Left lung (tissue), 14 donors: ENCODE measurements at regions of chr9 and their contacts with region 1.

Region 1: GRCh38 chr9:13988944-13989343 is 325.0 kb downstream of the NFIB start:
- DNase-seq: no peak
- ATAC-seq: no peak
- H3K4me3 ChIP-seq: no peak overlapping the region
- H3K27ac ChIP-seq: no peak overlapping the region
- H3K4me1 ChIP-seq: no peaks in the 10 kb centered on the region
- H3K27me3 ChIP-seq: no peaks in the 10 kb centered on the region
- CTCF ChIP-seq: no peak

Region 2: DNA sequence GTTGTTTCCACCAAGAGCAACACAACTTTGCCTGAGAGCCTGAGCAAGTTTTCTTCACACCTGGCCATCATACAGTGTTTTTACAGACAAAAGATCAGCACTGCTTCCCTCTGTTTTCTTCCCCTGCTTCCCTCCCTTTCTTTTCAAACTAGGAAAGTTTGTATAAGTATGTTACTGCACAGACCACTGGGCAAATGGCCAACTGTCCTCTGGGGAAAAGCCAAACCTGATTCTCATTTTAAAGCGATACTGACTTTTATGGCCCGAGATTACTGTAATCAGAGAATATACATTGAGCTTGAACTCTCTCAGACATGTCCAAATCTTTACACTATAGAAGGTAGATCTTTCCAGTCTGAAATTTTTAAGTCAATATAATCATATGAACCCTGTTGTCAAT is 90.0 kb before region 1 on chr9:
- intact Hi-C with region 1: no loop called
- DNase-seq: peak in 2 of 4 donors; percentile 48 to 70
- ATAC-seq: no peak
- H3K4me3 ChIP-seq: no peak overlapping the region
- H3K27ac ChIP-seq: no peak overlapping the region
- H3K4me1 ChIP-seq: no peaks in the 10 kb centered on the region
- H3K27me3 ChIP-seq: no peaks in the 10 kb centered on the region
- CTCF ChIP-seq: no peak

Region 3: DNA sequence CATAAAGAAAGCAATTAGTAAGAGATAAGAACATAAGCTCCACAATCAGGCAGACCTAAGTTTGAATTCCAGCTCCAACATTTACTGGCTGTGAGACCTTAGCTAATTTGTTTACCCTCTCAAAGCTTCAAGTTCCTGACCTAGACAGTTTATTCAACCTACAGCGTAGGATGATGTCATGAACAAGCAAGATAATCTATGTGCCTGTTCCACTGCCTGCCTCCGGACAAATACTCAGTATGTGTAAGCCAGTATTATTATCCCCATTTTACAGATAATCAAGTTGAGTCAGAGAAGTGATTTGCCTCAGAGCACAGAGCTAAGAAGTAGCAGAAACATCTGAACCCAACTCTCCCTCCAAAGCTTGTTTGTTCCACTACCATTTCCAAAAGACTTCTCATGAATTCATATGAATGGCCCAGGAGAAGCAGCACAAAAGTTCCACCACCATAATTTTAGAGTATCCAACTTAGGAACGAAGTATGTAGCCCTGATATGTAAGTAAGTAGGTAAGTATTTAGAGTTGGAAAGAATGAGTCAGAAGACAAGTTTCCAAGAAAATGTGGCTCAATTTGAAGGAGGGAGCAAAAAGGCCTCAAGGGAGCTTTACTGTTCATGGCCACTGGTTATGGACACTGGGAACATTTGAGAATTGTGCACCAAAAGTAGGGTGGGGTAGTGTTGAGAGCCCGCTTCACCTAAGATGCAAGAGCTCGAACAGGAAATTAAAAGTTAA is 73.2 kb before region 1 on chr9:
- intact Hi-C with region 1: no loop called
- DNase-seq: no peak
- ATAC-seq: no peak
- H3K4me3 ChIP-seq: no peak overlapping the region
- H3K27ac ChIP-seq: no peak overlapping the region
- H3K4me1 ChIP-seq: no peaks in the 10 kb centered on the region
- H3K27me3 ChIP-seq: no peaks in the 10 kb centered on the region
- CTCF ChIP-seq: no peak

Region 4: DNA sequence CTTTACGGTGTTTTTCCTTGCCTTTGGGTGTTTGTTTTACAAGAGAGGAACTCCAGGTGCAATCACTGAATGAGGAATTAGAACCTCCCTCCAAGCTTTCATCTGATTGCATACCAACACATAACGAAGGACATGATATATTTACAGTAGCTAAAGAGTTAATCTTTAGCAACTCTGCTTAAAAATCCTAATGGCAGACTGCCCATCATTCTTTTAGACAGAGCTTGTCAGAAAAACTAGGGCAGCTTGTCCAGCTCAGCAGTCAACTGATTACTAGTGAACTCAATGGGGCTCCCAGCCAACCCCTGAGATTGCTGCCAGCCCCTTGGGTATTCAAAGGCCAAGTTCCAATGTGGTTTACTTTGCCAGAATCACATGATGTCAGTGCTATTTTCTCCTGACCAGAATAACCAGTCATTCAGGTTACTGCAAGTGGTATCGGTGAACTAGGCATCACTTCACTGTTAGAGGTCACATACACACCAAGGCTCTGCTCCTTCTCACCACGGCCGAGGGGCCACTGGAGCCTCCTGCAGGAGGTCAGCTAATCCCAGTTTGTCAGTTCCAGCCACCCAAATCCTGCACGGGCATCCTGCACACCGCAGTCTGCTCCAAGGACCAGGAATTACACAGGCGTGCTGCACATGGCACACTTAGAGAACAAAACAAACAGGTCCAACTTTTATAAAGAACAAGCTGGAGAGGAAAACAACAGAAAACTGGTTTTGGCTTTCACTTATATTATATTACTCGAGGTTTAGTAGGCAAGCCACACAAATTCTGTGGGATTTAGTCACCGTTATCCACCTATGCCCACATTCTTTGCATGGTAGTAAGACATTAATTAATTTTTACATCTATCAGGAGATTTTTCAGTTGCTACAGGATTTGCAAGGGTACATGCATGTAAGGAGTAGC is 262.5 kb after region 1 on chr9:
- intact Hi-C with region 1: loop called in 1 of 2 experiments (anchors 5 kb)
- DNase-seq: peak; percentile 63 to 87 (median 75)
- ATAC-seq: peak; percentile 88
- H3K4me3 ChIP-seq: no peak overlapping the region
- H3K27ac ChIP-seq: peak overlapping the region; percentile 35 to 46
- H3K4me1 ChIP-seq: peaks cover 11 to 12% of the 10 kb centered on the region in 2 donors
- H3K27me3 ChIP-seq: no peaks in the 10 kb centered on the region
- CTCF ChIP-seq: no peak